Activated B cell treated with CpG ODN at 0.5 μM for 24 hours (primary cell): ENCODE measurements at regions of chr2 and their contacts with region 1.

Region 1: GRCh38 chr2:85602476-85603234 is at the start of gene TMEM150A:
- DNase-seq: peak; percentile 91
- ATAC-seq: peak; percentile 97
- H3K4me3 Mint-ChIP-seq: peak within 1 kb of the TSS; percentile 90
- H3K27ac Mint-ChIP-seq: peak within 1 kb of the TSS; percentile 84
- H3K4me1 Mint-ChIP-seq: peaks cover 31% of the 10 kb centered on the region
- H3K27me3 Mint-ChIP-seq: no peaks in the 10 kb centered on the region
- CTCF ChIP-seq: no peak
- total RNA-seq, gene TMEM150A: 13.2 and 15.0 TPM in 2 replicates

Region 2: DNA sequence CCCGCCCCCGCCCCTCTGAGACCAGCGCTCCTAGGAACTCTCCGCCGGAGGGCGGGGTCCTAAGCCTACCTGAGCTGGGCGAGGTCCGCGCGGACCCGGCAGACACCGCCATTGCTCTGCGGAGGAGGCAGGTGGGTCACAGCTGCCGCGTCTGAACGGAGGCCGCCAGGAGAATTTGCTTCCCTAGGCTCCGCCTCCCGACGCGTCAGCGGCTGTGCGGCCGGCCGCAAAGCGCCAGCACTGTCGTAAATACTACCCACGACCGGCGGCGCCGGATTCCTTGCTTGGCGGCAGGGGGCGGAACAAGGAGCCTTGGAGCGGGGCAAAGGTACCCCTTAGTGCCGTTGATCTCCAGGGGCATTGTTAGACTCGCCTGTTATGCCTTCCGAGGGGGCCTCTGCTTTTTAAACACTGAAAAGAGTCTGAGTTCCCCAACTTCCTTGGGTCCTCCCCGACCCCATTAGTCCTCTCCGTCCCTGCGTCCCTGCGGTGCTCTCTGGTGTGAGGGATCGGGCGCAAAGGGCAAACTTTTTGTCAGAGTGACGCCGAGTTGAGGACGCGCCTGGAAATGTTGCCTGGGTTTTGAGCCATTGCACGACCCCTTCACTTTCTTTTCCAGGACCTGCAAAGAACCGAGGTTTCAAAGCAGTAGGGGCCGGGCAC is 41.2 kb before region 1 on chr2 and contains the start of gene GGCX:
- CTCF ChIA-PET with region 1: no interaction called
- POLR2A ChIA-PET with region 1: interaction called, 23 read pairs
- intact Hi-C with region 1: loop called (anchors 1 kb)
- DNase-seq: peak; percentile 84
- ATAC-seq: peak; percentile 88
- H3K4me3 Mint-ChIP-seq: peak within 1 kb of the TSS; percentile 98
- H3K27ac Mint-ChIP-seq: peak within 1 kb of the TSS; percentile 98
- H3K4me1 Mint-ChIP-seq: peaks cover 38% of the 10 kb centered on the region
- H3K27me3 Mint-ChIP-seq: no peaks in the 10 kb centered on the region
- CTCF ChIP-seq: no peak
- total RNA-seq, gene GGCX: 30.0 and 30.7 TPM in 2 replicates

Region 3: GRCh38 chr2:85584857-85585783 is 17.5 kb before region 1 on chr2:
- CTCF ChIA-PET with region 1: interaction called, 4 read pairs
- POLR2A ChIA-PET with region 1: interaction called, 4 read pairs
- intact Hi-C with region 1: loop called (anchors 2 kb)
- DNase-seq: no peak
- ATAC-seq: peak; percentile 43
- H3K4me3 Mint-ChIP-seq: peak overlapping the region; percentile 82
- H3K27ac Mint-ChIP-seq: peak overlapping the region; percentile 63
- H3K4me1 Mint-ChIP-seq: peaks cover 46% of the 10 kb centered on the region
- H3K27me3 Mint-ChIP-seq: no peaks in the 10 kb centered on the region
- CTCF ChIP-seq: no peak

Region 4: GRCh38 chr2:85718009-85718391 is 115.3 kb after region 1 on chr2:
- CTCF ChIA-PET with region 1: no interaction called
- POLR2A ChIA-PET with region 1: no interaction called
- intact Hi-C with region 1: no loop called
- DNase-seq: no peak
- ATAC-seq: no peak
- H3K4me3 Mint-ChIP-seq: no peak overlapping the region
- H3K27ac Mint-ChIP-seq: no peak overlapping the region
- H3K4me1 Mint-ChIP-seq: no peaks in the 10 kb centered on the region
- H3K27me3 Mint-ChIP-seq: peaks cover 9% of the 10 kb centered on the region
- CTCF ChIP-seq: no peak

Region 5: DNA sequence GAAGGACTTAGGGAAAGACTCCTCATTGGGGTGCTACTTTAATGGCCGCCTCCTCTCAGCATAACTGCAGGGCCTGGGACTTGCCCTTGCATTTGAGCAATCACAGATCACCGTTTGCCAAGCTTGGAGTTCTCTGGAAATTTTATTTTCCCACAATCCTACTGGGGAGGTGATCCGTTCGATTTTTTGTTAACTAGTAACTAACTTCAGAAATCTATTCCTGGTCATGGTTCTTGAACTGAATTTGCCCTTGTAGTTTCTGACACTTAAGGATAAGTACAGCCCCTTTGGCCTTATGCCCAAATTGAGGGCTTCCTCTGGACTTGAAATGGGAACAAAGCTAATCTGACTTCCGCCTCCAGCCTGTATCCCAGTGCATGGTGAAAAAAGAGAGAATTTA is 346.6 kb after region 1 on chr2:
- CTCF ChIA-PET with region 1: no interaction called
- POLR2A ChIA-PET with region 1: no interaction called
- intact Hi-C with region 1: no loop called
- DNase-seq: no peak
- ATAC-seq: no peak
- H3K4me3 Mint-ChIP-seq: no peak overlapping the region
- H3K27ac Mint-ChIP-seq: no peak overlapping the region
- H3K4me1 Mint-ChIP-seq: no peaks in the 10 kb centered on the region
- H3K27me3 Mint-ChIP-seq: no peaks in the 10 kb centered on the region
- CTCF ChIP-seq: no peak

Region 6: GRCh38 chr2:86297382-86298147 is 694.9 kb after region 1 on chr2:
- CTCF ChIA-PET with region 1: no interaction called
- POLR2A ChIA-PET with region 1: no interaction called
- intact Hi-C with region 1: no loop called
- DNase-seq: no peak
- ATAC-seq: no peak
- H3K4me3 Mint-ChIP-seq: no peak overlapping the region
- H3K27ac Mint-ChIP-seq: no peak overlapping the region
- H3K4me1 Mint-ChIP-seq: no peaks in the 10 kb centered on the region
- H3K27me3 Mint-ChIP-seq: peaks cover 30% of the 10 kb centered on the region
- CTCF ChIP-seq: no peak